ENCODE measurements at regions of chr18 and their contacts with region 1.

Region 1: GRCh38 chr18:42114310-42114943 is 159.4 kb downstream of the PIK3C3 start:
- DNase-seq: peak; percentile 24
- H3K4me3 ChIP-seq: no peak overlapping the region
- CTCF ChIP-seq: peak; percentile 68

Region 2: DNA sequence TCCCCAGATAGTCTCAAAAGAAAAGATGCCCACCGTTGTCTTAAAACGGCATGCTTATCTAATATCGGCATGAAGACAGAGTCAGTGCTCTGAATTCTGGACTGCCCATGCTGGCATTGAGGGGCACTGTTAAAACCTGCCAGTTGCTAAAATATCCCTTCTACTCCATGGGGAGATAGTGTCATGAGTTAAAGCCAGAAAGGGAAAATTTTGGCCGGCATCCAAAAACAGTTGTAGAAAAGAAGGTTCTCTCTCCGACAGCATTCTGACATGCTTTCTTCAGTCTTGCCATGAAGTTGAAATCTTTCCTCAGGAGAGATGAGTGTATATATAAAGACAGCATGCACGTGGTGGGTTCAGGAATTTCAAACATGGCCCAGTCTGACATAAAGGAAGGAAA is 560.7 kb before region 1 on chr18:
- CTCF ChIA-PET with region 1: no interaction called
- POLR2A ChIA-PET with region 1: no interaction called
- DNase-seq: no peak
- H3K4me3 ChIP-seq: no peak overlapping the region
- CTCF ChIP-seq: no peak

Region 3: DNA sequence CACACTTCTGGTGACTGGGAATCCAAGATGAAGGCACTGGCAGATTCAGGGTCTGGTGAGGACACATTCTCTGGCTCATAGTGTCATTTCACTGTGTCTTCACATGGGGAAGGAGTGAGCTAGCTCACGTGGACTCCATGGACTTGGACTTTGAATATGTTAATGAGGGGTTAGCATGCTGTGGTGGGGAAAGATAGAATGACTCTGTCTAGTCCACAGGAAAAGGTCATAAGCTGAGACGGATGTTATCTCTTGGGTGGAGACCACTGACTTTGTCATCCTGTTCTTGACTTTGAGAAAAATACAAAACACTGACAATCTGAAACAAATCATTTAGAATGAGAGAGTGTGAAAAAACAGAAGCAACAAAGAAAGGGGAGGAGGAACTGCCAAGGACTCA is 13.5 kb before region 1 on chr18:
- CTCF ChIA-PET with region 1: interaction called, 17 read pairs
- POLR2A ChIA-PET with region 1: no interaction called
- DNase-seq: no peak
- H3K4me3 ChIP-seq: no peak overlapping the region
- CTCF ChIP-seq: no peak

Region 4: GRCh38 chr18:42131066-42131929 is 16.9 kb after region 1 on chr18:
- CTCF ChIA-PET with region 1: interaction called, 33 read pairs
- POLR2A ChIA-PET with region 1: no interaction called
- DNase-seq: no peak
- H3K4me3 ChIP-seq: no peak overlapping the region
- CTCF ChIP-seq: no peak

Region 5: DNA sequence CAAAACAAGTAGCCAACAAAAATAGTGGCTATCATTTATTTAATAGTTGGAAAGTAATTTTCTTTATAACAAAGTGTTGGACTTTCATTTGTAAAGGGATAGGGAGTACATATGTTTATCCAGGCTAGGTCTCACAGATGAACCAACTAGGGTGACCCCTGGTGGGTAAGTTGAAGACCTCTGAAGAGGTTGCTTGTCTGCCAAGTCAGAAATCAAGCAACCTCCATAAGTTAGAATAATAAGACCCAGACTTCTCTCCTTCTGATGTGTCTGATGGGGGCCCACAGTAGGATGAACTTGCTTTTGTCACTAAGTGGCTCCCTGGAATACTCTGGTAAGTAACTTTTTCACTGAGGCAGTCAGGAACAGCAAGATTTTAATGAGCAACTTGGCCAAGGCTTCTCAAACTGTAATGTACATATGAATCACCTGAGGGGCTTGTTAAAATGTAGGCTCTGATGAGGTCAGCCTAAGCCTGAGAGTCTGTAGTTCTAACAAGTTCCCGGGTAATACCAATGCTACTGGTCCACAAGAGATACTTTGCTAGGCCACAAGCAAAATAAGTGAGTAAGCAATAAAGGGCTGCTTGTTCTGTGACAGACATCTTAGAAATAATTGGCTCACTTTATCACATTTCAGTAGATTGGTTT is 160.2 kb after region 1 on chr18:
- CTCF ChIA-PET with region 1: interaction called, 86 read pairs
- POLR2A ChIA-PET with region 1: no interaction called
- DNase-seq: no peak
- H3K4me3 ChIP-seq: no peak overlapping the region
- CTCF ChIP-seq: peak; percentile 13

Region 6: DNA sequence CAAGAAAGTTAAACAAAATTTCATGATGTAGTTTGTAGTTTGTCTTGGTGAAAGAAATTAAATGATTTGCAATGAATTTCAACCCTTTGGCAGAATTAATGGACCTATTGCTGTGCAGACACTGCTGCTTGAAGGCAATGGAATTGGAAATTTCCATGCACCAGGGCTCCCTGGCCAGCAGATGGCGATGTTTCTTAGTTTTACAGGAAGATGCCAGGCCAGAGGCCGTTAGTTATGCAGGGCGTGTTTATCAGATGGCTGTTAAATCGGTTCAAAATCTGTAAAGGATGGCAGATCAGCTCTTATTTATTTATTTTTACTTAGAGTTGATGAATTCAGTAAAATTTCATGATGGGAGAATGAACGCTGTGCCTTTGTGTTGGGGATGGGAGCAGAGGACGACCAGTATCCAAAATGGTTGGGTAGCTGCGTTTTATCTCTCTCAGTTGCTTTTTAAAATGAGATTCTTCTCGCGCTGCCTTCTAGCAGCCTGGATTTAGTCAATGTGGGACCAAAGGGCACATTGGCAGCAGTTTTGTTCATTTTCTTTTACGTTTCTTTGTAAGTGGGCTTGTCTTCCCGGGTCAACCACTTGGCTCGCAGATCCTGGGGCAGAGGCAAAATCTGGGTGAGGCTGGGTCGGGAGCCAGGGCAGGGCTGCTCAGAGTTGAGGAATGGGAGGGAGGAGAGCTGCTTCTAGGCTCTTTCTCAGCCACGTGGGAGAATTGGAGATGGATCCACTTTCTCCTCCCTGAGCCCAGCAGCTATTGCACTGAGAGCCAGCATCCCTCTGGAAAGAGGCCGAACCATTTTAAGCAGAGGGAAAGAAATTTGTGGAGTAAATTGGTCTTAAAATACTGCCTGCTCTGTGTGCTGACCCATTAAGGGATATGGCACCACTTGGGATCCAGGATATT is 184.6 kb after region 1 on chr18:
- CTCF ChIA-PET with region 1: interaction called, 29 read pairs
- POLR2A ChIA-PET with region 1: no interaction called
- DNase-seq: peak; percentile 7
- H3K4me3 ChIP-seq: no peak overlapping the region
- CTCF ChIP-seq: peak; percentile 81

Region 7: DNA sequence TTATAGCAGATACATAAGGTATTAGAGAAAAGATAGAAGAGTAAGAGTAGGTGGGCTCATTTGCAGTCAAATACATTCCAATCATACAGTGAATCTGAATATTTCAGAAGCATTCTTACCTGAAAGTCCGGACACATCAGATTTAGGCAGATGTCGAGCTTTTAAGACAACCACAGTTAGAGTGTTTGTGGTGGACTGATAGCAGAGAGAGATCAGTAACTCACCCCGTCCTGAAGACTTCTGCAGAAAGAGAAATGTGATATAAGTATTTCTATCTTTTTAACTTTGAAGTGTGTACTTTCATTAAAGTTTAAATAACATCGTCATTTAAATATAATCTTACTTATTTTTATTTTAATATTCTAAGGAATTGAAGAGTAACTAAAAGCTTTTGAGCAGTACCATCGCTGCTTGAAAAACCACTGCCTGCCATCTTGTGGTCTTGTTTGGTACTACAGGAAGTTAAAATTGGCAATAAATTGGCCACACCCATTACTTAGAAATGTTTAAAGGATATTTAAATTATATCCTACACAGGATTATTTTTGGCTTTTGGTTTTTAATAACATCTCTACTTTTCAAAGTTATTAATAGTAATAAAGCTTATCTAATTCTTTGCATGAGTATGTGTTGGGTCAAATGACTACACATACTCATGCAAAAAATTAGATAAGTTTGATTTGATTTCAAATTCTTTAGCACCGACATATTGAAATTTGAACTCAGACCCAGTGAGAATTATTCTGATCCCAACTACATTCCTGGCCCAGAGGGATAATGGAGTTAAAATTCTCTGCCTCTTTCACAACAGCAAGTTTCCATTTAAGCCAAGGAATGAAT is 1157.4 kb after region 1 on chr18:
- CTCF ChIA-PET with region 1: interaction called, 124 read pairs
- POLR2A ChIA-PET with region 1: no interaction called
- DNase-seq: peak; percentile 7
- H3K4me3 ChIP-seq: no peak overlapping the region
- CTCF ChIP-seq: peak; percentile 59

Region 8: GRCh38 chr18:43587538-43588153 is 1473.2 kb after region 1 on chr18:
- CTCF ChIA-PET with region 1: interaction called, 21 read pairs
- POLR2A ChIA-PET with region 1: no interaction called
- DNase-seq: no peak
- H3K4me3 ChIP-seq: no peak overlapping the region
- CTCF ChIP-seq: peak; percentile 61

Measured in AG04449 (cell line).